Caco-2 (cell line): ENCODE measurements at regions of chr6 and their contacts with region 1.

Region 1: GRCh38 chr6:90296346-90297114 is at the start of gene BACH2:
- DNase-seq: peak; percentile 74 to 76
- H3K4me3 ChIP-seq: peak within 1 kb of the TSS; percentile 64
- H3K4me3 Mint-ChIP-seq: peak within 1 kb of the TSS; percentile 72
- H3K27ac Mint-ChIP-seq: no peak within 1 kb of the TSS
- H3K4me1 ChIP-seq: peaks cover 7% of the 10 kb centered on the region; the same call in 1 of the 2 replicates
- H3K4me1 Mint-ChIP-seq: no peaks in the 10 kb centered on the region
- H3K27me3 ChIP-seq: peaks cover 7% of the 10 kb centered on the region
- H3K27me3 Mint-ChIP-seq: peaks cover 17% of the 10 kb centered on the region
- CTCF ChIP-seq: no peak
- total RNA-seq, gene BACH2: 0.32 and 0.43 TPM in 2 replicates

Region 2: DNA sequence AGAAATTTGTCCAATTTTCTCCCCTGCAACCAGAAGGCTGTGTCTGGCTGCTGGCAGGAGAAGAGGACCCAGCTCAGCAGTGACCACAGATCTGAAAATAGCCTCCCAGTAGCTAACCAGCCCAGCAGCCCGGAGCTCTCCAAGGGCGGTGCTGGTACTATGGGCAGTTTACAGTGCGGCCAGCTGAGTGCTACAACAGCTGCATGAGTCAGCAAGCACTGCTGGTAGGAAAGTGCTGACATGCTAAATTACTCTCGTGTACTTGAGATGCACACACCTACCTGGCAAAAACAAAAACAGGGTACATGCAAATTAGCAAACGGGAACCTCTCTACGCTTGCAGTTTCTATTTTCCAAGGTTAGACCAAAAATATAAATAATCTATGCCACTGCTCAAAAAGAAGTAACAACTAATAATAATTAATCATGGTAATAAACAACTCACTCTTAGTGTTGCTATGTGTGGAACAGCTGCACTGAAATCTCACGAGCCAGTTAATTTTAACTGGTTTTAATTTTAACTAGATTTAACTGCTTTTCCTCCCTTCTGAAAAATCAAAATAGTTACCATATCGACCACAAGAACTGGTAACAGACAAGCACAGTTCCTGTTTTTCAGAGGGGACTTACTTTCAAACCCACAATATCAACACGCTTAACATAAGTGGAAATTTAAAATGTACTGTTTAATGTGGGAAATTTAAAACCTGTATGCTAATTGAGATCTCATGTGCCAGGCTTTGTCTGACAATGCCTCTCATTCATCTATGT is 10.7 kb before region 1 on chr6:
- CTCF ChIA-PET with region 1: interaction called, 3 read pairs
- POLR2A ChIA-PET with region 1: no interaction called
- intact Hi-C with region 1: loop called (anchors 1 kb)
- DNase-seq: peak; percentile 17 to 33
- H3K4me3 ChIP-seq: no peak overlapping the region
- H3K4me3 Mint-ChIP-seq: no peak overlapping the region
- H3K27ac Mint-ChIP-seq: no peak overlapping the region
- H3K4me1 ChIP-seq: 0 out of 2 replicates have a peak, but pooled peaks cover 3% of the 10 kb centered on the region
- H3K4me1 Mint-ChIP-seq: peaks cover 5% of the 10 kb centered on the region
- H3K27me3 ChIP-seq: no peaks in the 10 kb centered on the region; the same call in 1 of the 2 replicates
- H3K27me3 Mint-ChIP-seq: peaks cover 12% of the 10 kb centered on the region
- CTCF ChIP-seq: no peak